Lower leg skin (tissue), 4 donors: ENCODE measurements at regions of chr7 and their contacts with region 1.

Region 1: GRCh38 chr7:107255602-107256001 is 86.8 kb downstream of the HBP1 start:
- DNase-seq: no peak
- H3K4me3 ChIP-seq: no peak overlapping the region
- CTCF ChIP-seq: no peak
- POLR2A ChIP-seq: no peak

Region 2: DNA sequence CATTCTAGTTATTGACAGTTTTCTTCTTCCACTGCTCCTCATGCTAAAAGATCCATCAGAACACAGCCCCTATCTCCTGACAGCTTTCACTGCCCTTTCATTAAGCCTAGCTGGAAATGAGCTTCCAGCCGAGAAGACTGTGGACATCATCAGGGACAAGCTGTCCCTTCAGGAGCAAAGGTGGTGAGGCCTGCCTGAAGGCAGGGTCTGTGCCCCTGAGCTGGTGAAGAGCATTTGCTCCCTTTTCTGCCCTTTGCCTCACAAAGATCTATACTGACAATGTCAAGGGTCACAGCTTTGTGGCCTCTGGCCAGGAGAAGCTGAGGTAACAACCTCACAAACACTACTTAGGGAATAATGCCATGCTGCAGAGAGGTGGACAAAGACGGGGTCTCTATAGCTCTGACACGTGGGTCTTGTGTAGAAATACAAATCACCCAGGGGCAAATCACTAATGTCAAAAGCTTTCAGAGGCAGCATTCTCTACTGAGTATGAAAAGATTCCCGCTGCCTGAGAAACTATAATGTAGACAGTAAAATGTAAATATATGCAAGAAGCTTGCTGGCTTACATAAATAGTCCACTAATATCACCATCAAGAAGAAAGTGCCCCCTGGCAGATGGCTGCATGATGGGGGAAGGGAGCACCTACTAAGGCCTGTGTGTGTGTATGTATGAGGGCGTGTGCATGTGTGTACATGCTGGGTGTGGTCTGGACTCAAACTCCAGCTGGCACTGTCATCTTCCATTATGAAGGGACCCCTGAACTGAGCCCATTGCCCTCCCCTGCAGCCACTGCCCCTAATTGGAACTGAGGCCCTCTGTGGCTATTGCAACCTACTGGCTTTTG is 31.0 kb before region 1 on chr7:
- intact Hi-C with region 1: loop called (anchors 2 kb)
- DNase-seq: no peak
- H3K4me3 ChIP-seq: no peak overlapping the region
- CTCF ChIP-seq: no peak
- POLR2A ChIP-seq: no peak

Region 3: GRCh38 chr7:107277331-107277730 is 21.7 kb after region 1 on chr7:
- intact Hi-C with region 1: no loop called
- DNase-seq: no peak
- H3K4me3 ChIP-seq: no peak overlapping the region
- CTCF ChIP-seq: no peak
- POLR2A ChIP-seq: no peak